PC-9 (cell line): ENCODE measurements at regions of chr2 and their contacts with region 1.

Region 1: DNA sequence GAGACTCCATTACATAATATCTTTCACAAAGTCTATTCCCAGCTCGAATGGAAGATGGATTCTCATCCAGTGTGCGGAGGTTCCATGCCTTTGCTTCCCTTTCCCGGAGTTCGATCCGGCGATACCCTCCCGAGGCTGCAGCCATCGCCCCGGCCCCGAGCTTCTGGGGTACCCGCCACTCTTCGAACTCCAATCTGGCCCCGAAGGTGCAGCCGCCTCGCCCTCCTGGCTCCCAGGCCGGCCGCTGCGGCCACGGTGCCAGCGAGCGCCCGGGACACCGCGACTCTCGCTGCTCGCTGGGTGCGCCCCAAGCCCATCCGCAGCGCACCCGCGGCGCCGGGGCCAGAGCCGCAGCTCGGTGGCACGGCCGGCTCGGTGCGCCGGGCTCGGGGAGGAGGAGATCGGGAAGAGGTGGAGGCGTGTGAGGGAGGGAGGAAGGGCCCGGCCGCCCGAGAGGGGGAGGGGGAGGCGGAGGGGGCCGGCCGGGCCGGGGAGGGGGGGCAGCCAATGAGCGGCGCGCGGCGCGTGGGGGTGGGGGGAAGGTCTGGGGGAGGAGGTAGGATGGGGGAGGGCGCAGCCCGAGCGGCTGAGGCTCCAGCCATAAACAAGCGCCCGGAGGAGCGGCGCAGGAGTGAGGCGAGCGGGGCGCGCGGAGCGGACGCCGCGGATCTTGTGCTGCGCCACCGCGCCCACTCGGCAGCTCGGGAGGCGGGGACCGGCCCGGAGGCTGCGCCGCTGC is at the start of gene CRIM1:
- DNase-seq: peak; percentile 70 to 82
- H3K4me3 ChIP-seq: peak within 1 kb of the TSS; percentile 67
- H3K27ac ChIP-seq: peak within 1 kb of the TSS; percentile 60
- H3K4me1 ChIP-seq: peaks cover 55% of the 10 kb centered on the region
- H3K27me3 ChIP-seq: no peaks in the 10 kb centered on the region
- CTCF ChIP-seq: no peak
- total RNA-seq, gene CRIM1: 133 and 154 TPM in 2 replicates

Region 2: GRCh38 chr2:35598310-35598709 is 757.0 kb before region 1 on chr2:
- CTCF ChIA-PET with region 1: no interaction called
- POLR2A ChIA-PET with region 1: no interaction called
- intact Hi-C with region 1: no loop called
- DNase-seq: no peak
- H3K4me3 ChIP-seq: no peak overlapping the region
- H3K27ac ChIP-seq: no peak overlapping the region
- H3K4me1 ChIP-seq: no peaks in the 10 kb centered on the region
- H3K27me3 ChIP-seq: no peaks in the 10 kb centered on the region
- CTCF ChIP-seq: no peak

Region 3: DNA sequence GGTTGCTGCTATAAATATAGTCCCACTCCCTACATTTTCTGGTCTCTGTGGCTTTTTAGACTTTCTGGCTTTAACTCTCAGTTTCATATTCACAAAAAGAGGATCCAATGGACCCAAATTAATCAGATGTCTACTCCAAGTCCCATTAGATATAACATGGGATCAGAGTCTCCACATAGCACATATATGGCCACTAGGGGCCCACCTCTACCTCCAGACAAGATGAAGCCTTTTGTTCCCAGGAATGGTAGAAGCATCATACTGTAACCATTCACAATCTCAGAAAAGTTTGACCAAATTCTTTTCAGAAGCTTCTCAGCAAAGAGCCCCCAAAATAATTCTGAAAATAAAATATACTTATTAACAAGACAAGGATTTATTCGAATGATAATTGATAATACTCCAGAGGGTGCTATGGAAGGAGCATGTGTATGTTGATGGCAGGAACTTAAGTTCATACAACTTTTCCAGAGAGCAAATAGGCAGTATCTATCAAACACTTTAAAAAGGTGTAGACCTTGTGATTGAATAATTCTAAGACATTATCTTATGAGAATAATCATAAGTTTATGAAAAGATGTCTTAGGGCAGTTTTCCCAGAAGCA is 382.1 kb before region 1 on chr2:
- CTCF ChIA-PET with region 1: no interaction called
- POLR2A ChIA-PET with region 1: no interaction called
- intact Hi-C with region 1: loop called (anchors 5 kb)
- DNase-seq: peak in 1 of 2 experiments; percentile 9
- H3K4me3 ChIP-seq: no peak overlapping the region
- H3K27ac ChIP-seq: no peak overlapping the region
- H3K4me1 ChIP-seq: no peaks in the 10 kb centered on the region
- H3K27me3 ChIP-seq: no peaks in the 10 kb centered on the region
- CTCF ChIP-seq: peak; percentile 68

Region 4: DNA sequence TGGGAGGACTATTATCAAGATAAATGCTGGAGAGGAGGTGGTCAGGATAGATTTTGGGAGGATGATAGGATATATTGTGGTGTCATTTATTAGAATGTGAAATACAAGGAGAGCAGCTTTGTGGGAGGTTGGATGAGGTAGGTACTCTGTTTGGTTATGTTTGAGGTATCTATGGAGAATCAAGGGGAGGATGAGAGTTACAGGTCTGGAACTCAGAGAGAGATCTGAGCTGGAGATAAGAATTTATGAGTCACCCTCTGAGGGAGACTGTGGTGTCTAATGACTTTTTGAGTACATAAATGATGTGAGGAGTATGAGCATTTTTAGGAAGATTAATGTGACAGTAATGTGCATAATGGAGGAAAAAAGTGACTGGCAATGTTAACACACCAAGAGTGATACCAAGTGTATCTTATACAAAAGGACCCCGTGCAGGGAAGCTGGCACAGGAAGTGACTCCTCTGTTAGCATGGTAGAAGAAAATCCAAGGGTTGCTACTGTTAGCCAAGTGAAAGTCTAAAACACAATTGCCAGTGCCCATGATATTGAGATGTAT is 48.4 kb after region 1 on chr2:
- CTCF ChIA-PET with region 1: no interaction called
- POLR2A ChIA-PET with region 1: no interaction called
- intact Hi-C with region 1: loop called (anchors 1 kb)
- DNase-seq: peak; percentile 39 to 97
- H3K4me3 ChIP-seq: no peak overlapping the region
- H3K27ac ChIP-seq: peak overlapping the region; percentile 43
- H3K4me1 ChIP-seq: peaks cover 19% of the 10 kb centered on the region
- H3K27me3 ChIP-seq: no peaks in the 10 kb centered on the region
- CTCF ChIP-seq: no peak

Region 5: GRCh38 chr2:36461039-36461681 is 105.8 kb after region 1 on chr2:
- CTCF ChIA-PET with region 1: interaction called, 16 read pairs
- POLR2A ChIA-PET with region 1: interaction called, 5 read pairs
- intact Hi-C with region 1: loop called (anchors 1 kb)
- DNase-seq: peak in 1 of 2 experiments; percentile 94
- H3K4me3 ChIP-seq: peak overlapping the region; percentile 5; the same call in 1 of the 2 replicates
- H3K27ac ChIP-seq: peak overlapping the region; percentile 79
- H3K4me1 ChIP-seq: peaks cover 37% of the 10 kb centered on the region
- H3K27me3 ChIP-seq: no peaks in the 10 kb centered on the region
- CTCF ChIP-seq: no peak

Region 6: GRCh38 chr2:36663851-36664695 is 308.8 kb after region 1 on chr2:
- CTCF ChIA-PET with region 1: no interaction called
- POLR2A ChIA-PET with region 1: no interaction called
- intact Hi-C with region 1: loop called (anchors 1 kb)
- DNase-seq: peak; percentile 25 to 71
- H3K4me3 ChIP-seq: no peak overlapping the region
- H3K27ac ChIP-seq: no peak overlapping the region
- H3K4me1 ChIP-seq: peaks cover 18% of the 10 kb centered on the region
- H3K27me3 ChIP-seq: no peaks in the 10 kb centered on the region
- CTCF ChIP-seq: peak; percentile 94